Sciatic nerve (tissue), 2 donors: ENCODE measurements at regions of chr9 and their contacts with region 1.

Region 1: DNA sequence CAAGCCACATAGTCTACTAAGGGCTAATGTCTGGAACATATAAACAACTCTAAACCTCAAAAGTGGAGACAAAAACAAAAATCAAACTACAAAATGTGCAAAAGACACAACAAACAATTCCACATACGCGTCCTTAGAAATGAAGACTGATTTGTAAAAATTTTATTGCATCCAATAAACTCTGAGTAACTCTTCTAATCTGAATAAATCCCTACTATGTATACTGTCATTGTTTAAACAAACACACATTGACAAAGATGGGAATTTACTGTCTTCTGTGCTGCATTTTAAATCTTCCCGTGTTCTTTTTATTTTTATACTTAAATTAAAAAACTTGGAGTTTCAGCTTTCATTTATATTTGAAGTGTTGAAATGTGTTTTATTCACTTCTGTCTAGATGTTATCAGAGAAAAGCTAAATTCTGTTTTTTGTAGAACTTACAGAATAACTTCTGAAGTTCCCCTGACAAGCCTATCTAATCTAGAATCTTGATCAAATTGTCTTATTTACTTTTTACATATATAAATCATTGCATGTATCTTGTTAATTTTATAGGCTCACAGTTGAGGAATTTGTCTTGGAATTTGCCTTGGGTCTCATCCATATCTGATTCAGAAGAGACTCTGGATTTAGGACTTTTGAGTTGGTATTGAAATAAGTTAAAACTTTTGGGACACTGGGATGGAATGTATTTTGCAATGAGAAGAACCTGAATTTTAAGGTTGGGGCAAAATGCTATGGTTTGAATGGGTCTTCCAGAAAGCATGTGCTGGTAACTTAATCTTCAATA is 2064.4 kb upstream of the C9orf72 start:
- DNase-seq: no peak
- ATAC-seq: no peak

Region 2: GRCh38 chr9:28832168-28832760 is 805.4 kb before region 1 on chr9:
- intact Hi-C with region 1: loop called (anchors 10 kb)
- DNase-seq: no peak
- ATAC-seq: no peak

Region 3: DNA sequence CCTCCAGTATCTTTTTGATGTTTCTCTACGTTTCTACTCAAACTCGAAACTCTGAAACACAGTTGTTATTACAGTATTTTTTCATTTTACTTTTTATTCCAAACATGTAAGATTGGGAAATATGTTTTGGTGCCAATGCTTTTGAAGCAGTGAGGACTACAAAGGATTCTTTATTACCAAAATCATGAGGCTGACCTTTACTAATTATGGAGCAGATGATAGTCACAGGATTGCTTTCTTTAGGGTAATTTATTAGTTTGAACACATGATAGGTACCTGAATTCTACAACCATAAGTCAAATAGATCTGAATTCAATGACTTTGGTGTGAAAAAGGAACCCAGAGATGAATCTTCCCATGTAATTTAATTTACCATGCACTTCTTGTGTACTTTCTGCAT is 49.3 kb before region 1 on chr9:
- intact Hi-C with region 1: no loop called
- DNase-seq: no peak
- ATAC-seq: no peak